HEK293T (cell line): ENCODE measurements at regions of chr10 and their contacts with region 1.

Region 1: DNA sequence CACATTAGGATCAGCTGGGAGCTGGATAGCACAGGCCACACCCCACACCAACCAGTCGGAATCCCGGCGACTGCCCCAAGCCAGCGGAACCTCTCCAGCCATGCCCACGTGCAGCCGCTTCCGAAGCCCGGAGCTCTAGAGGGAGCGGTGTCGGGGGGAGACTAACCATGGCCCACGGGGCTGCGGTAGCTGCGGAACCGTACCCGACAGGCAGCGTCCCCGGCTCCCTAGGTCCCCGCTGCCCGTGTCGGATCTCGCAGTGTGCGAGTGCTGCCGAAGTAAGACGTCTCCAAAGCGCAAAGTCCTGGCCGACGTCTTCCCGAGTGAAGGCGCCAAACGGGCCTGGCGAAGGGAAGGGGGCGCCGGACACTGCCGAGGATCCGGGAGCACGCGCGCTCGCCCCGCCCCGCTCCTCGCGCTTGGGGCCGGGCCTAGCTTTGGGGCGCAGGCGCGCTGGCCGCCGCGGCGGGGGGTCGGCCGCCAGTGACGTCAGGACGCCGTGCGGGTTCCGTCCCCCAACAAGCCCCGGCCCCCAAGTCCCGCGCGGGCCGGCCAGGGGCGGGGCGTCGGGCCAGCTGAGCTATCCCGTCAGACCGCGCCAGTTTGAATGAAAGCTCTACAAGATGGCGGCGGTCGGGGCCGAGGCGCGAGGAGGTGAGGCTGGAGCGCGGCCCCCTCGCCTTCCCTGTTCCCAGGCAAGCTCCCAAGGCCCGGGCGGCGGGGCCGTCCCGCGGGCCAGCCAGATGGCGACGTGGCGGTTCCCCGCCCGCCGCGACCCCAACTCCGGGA is at the start of gene SUV39H2:
- DNase-seq: peak; percentile 97

Region 2: GRCh38 chr10:14843327-14843988 is 35.0 kb before region 1 on chr10:
- CTCF ChIA-PET with region 1: no interaction called
- POLR2A ChIA-PET with region 1: interaction called, 41 read pairs
- DNase-seq: no peak

Region 3: DNA sequence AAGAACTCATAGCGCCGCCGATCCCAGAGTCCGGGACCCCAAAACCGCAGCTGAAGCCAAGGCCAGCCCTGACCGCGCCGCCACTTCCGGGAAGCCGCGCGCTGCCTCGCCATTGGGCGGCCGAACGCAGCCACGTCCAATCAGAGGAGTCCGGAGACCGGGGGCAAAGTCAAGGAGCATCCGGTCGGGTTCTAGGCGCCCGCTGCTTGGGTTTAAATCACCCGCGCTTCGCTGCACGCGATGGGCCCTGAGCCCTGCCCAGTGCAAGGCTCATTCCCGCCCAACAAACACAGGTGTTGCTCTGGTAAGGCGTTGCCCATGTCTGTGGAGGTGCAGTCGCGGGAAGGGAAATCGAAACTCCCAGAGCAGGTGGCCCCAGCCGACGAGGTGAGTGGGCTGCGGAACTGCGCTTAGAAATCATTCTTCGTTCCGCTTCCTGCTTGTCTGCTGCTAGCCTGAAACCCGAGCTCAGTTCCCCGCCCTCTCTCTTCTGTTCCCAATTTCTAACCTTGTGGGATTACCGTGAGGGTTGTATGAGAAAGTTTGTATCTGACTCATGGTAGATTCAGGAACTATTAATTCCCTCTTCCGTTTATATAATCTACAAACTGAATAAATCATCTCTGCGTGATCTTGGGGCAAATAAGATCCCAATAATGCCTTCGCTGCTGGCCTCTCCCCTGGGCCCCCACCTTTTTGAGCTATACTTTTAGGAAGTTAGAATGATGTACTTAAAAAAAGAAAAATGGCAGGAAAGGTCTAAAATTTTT is 75.7 kb after region 1 on chr10 and contains the start of gene DCLRE1C:
- CTCF ChIA-PET with region 1: interaction called, 4 read pairs
- POLR2A ChIA-PET with region 1: interaction called, 35 read pairs
- DNase-seq: peak; percentile 88

Region 4: DNA sequence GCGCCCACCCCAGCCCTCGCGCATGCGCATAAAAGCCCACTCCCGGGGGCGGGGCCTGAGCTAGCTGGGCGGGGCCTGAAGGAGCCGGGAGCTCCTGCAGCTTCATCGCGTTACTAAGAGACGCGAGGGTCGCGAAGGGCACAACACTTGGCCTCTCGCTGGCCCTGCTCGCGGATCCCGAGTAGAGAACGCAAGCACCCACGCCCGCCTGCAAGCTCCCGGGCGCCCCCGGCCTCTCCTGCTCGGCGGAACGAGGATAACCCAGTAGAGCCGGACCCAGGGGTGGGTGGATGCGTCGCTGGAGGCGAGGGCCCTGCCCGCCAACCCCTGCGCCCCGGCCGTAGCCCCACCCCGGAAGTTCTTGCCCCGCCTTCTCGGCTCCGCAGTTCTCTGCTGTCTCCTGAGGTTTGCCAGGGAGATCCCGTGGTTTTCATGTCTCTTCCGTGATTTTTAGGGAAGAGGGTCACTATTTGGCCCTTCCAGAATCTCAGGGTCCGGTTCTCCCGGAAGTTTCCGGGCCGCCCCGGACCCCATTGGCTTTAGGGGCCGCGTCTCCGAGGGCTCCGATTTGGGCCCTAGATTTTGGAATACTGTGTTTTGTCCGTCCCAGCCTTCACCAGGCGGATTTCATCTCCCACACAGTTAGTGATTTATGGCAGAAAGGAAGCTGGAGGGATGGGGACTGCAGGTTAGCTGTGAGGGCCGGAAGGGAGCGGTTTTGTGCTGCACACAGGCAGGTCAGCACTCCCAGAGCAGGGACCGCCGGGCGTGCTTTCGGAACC is 81.0 kb after region 1 on chr10 and contains the start of gene MEIG1:
- CTCF ChIA-PET with region 1: no interaction called
- POLR2A ChIA-PET with region 1: interaction called, 35 read pairs
- DNase-seq: peak; percentile 93